ENCODE measurements at regions of chr21 and their contacts with region 1.

Region 1: GRCh38 chr21:25161571-25161970 is 445.7 kb downstream of the MRPL39 start:
- H3K4me3 Mint-ChIP-seq: no peak overlapping the region
- H3K27ac Mint-ChIP-seq: no peak overlapping the region
- H3K4me1 Mint-ChIP-seq: peaks cover 6% of the 10 kb centered on the region
- H3K27me3 Mint-ChIP-seq: no peaks in the 10 kb centered on the region

Region 2: GRCh38 chr21:25149022-25149421 is 12.5 kb before region 1 on chr21:
- intact Hi-C with region 1: loop called (anchors 1 kb)
- H3K4me3 Mint-ChIP-seq: no peak overlapping the region
- H3K27ac Mint-ChIP-seq: no peak overlapping the region
- H3K4me1 Mint-ChIP-seq: no peaks in the 10 kb centered on the region
- H3K27me3 Mint-ChIP-seq: no peaks in the 10 kb centered on the region

Region 3: GRCh38 chr21:25428537-25428936 is 267.0 kb after region 1 on chr21:
- intact Hi-C with region 1: no loop called
- H3K4me3 Mint-ChIP-seq: no peak overlapping the region
- H3K27ac Mint-ChIP-seq: no peak overlapping the region
- H3K4me1 Mint-ChIP-seq: peaks cover 5% of the 10 kb centered on the region
- H3K27me3 Mint-ChIP-seq: no peaks in the 10 kb centered on the region

Region 4: GRCh38 chr21:25453524-25453923 is 292.0 kb after region 1 on chr21:
- intact Hi-C with region 1: no loop called
- H3K4me3 Mint-ChIP-seq: no peak overlapping the region
- H3K27ac Mint-ChIP-seq: no peak overlapping the region
- H3K4me1 Mint-ChIP-seq: peaks cover 16% of the 10 kb centered on the region
- H3K27me3 Mint-ChIP-seq: no peaks in the 10 kb centered on the region

Region 5: DNA sequence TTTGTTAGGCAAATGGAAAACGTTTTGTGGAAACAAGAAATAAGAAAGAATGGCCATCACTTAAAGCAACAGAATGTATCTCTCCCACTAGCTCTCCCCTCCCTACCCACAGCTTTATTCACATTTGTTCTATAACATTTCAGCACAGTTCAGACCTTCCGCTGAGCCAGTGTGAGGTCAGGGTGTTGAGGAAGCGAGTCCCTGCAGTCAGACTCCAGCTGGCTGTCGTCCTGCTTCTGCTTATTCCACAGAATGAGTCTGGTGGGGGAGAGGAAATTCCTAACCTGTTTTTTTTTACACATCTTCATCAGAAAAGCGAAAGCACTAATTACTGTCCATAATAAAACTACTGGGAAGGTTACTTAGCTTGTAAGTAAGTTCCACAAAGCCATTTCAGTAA is 406.7 kb after region 1 on chr21:
- intact Hi-C with region 1: no loop called
- H3K4me3 Mint-ChIP-seq: peak overlapping the region; percentile 9
- H3K27ac Mint-ChIP-seq: no peak overlapping the region
- H3K4me1 Mint-ChIP-seq: peaks cover 31% of the 10 kb centered on the region
- H3K27me3 Mint-ChIP-seq: no peaks in the 10 kb centered on the region